ENCODE measurements at regions of chr15 and their contacts with region 1.

Region 1: DNA sequence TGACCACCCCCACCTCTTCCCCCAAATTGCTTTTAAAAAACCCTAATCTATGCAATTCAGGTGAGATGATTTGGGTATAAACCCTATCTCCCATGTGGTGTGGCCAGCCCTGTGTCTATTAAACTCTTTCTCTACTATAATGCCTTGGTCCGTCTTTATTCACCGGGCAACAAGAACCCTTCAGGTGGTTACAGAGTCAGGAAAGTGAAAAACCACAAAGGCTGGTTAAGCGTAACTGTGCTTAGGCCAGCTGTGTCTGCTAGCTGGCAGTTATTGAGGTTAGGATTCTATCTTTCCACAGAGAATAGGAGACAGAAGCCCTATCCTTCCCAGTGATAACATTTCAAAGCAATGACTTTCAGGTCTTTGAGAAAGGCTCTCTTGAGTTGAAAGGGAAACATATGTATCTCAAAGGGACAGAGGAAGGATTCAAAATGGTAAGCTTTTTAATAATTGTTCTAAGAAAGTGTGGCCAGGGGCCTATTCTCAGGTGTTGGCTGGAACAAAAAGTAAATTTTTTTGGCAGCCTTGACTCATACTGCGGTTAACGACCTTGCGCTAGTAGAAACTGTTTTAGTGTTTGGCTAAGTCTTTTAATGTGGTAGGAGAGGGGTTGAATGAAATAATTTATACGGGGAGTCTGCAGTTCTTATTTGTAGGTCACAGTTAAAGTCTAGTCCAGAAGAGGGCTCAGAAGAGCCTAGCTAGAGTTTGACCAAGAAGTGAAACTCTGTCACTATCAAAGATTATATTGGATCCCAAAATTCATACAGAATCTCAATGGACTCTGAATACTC is 89.0 kb downstream of the NPAP1 start:
- DNase-seq: no peak
- H3K4me3 ChIP-seq: no peak overlapping the region
- CTCF ChIP-seq: no peak
- POLR2A ChIP-seq: no peak

Region 2: GRCh38 chr15:24734391-24734790 is 30.2 kb before region 1 on chr15:
- intact Hi-C with region 1: loop called (anchors 5 kb)
- DNase-seq: no peak
- H3K4me3 ChIP-seq: no peak overlapping the region
- CTCF ChIP-seq: no peak
- POLR2A ChIP-seq: no peak

Region 3: DNA sequence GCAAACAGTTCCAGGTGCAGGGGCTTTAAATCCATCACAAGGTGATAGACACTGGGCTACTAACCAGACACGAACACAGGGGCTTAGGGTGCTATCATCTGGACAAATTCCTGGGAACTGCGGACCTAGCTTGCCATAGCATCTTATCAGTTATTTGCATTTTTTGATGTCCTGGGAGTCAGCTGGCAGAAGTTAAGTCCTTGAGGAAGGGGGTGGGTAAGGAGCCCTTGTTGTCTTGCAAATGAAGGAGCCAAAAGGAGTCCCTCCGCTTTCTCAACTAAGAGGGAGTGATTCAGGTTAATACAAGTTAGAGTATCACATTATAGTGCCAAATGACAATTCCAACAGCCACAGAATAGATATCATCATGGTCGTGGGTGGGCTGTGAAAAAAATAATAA is 19.9 kb after region 1 on chr15:
- intact Hi-C with region 1: no loop called
- DNase-seq: no peak
- H3K4me3 ChIP-seq: no peak overlapping the region
- CTCF ChIP-seq: no peak
- POLR2A ChIP-seq: no peak

Region 4: GRCh38 chr15:25056484-25057425 is 292.2 kb after region 1 on chr15:
- intact Hi-C with region 1: no loop called
- DNase-seq: peak in 1 of 2 donors; percentile 57
- H3K4me3 ChIP-seq: no peak overlapping the region
- CTCF ChIP-seq: no peak
- POLR2A ChIP-seq: no peak

Measured in lower leg skin (tissue), 4 donors.